ENCODE measurements at regions of chr2 and their contacts with region 1.

Region 1: DNA sequence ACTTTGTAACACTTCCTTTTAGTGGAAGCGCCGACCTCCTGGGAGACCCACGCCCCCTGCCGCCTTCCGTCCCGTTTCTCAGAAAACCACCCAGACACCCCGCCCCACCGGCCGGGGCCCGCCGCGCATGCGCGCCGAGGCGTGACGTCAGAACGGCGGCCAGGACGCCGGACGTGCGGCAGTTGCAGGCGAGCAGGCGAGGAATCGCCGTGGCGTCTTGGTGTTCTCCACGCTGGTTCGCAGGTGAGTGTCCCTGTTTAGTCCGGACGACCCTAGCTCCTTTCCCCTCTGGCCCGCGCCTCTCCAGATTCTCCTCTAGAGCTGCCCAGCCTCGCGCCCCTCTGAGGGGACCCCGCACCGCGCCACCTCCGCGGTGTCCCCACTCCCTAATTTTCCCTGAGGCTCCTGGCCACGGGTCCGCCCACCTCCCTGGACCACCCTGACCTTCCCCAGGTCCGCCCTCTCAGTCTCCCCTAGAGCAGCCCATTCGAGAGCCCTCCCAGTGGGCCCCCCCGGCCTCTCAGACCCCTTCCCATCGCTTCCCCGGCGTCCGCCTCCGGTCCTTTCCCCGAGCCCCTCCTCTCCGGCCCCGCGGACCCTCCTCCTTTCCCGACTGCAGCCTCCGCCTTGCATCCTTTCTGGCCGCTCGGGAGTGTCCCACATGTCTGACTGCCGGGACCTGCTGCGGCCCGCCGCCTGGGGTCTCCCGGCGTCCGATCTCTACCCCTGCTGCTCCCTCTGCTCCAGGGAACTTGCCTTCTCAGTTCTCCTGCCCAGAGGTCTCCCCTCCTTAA is at the start of gene PLEKHB2:
- DNase-seq: peak; percentile 95

Region 2: GRCh38 chr2:131093006-131093695 is 12.2 kb before region 1 on chr2 and contains the start of gene FAM168B:
- CTCF ChIA-PET with region 1: no interaction called
- POLR2A ChIA-PET with region 1: interaction called, 35 read pairs
- DNase-seq: peak; percentile 90